K562 (cell line): ENCODE measurements at regions of chr22 and their contacts with region 1.

Region 1: DNA sequence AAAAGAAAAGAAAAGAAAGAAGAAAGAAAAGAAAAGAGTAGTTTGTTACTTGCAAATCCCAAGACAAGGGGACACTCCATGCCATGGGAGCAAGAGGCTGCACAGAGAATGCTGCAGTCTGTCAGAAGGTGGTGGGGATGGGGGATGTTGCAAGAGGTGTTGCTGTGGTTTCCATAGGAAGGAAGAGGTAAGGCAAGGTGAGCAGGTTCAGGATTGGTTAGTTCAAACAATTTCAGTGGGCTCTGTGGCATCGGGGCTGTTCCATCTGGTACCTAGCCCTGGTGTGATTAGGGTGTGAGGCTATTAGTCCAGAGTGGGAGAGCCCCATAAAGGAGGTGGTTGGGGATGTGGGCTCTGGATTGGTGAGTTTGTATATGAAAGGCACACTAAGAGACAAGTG is 172.7 kb downstream of the BCR start:
- DNase-seq: no peak
- ATAC-seq: no peak
- H3K4me3 ChIP-seq: no peak overlapping the region
- H3K27ac ChIP-seq: no peak overlapping the region
- H3K4me1 ChIP-seq: no peaks in the 10 kb centered on the region
- H3K27me3 ChIP-seq: no peaks in the 10 kb centered on the region; a peak in 2 of 5 replicates
- CTCF ChIP-seq: no peak
- EP300 ChIP-seq: no peak
- POLR2A ChIP-seq: no peak
- RAD21 ChIP-seq: no peak

Region 2: GRCh38 chr22:24289741-24290163 is 936.7 kb after region 1 on chr22:
- CTCF ChIA-PET with region 1: no interaction called
- POLR2A ChIA-PET with region 1: no interaction called
- in situ Hi-C with region 1: loop called (anchors 10 kb)
- intact Hi-C with region 1: no loop called
- DNase-seq: peak; percentile 34 to 58 (median 46)
- ATAC-seq: peak; percentile 85
- H3K4me3 ChIP-seq: no peak overlapping the region
- H3K27ac ChIP-seq: peak overlapping the region; percentile 52; the same call in 2 of the 3 replicates
- H3K4me1 ChIP-seq: peaks cover 0 to 23% of the 10 kb centered on the region in 2 experiments; a peak in 3 of 5 replicates
- H3K27me3 ChIP-seq: no peaks in the 10 kb centered on the region
- CTCF ChIP-seq: no peak
- EP300 ChIP-seq: no peak
- POLR2A ChIP-seq: no peak
- RAD21 ChIP-seq: no peak